ENCODE measurements at regions of chr22 and their contacts with region 1.

Region 1: DNA sequence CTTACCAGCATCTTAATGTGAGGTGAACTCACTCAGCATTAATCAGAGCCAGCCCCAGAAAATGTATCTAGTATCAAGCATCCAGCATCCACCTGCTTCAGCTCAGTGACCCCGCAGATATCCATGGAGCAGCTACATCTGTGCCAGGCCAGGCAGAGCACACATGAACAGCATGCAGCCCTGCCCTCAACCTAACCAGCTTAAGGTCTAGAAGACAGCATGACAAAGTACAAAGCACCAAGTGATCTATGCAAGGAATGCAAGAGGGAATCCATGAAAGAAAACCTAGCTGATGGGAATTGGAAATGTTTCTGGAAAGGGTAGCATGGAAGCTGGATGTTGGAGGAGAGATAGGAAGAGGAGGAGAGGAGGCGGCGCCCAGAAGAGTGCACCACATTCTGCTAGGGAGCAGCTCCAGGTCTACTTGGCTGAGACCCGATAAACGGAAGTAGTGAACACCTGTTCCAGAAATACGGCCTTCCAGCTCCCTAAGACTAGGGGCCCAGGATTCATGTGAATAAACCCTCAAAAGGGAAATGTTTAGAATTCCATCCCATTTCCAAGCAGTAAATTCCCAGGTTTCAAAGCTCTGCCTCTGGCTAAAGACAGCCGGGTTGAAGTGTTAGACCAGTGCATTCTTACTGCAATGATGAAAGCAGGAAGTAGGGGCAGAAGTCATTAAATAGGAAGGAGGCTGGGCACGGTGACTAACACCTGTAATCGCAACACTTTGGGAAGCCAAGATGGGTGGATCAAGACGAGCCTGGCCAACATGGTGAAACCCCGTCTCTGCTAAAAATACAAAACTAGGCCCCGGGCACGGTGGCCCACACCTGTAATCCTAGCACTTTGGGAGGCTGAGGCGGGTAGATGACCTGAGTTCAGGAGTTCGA is 23.5 kb upstream of the L3MBTL2 start:
- DNase-seq: peak; percentile 87
- H3K4me3 ChIP-seq: no peak overlapping the region
- H3K27ac ChIP-seq: peak overlapping the region; percentile 83
- H3K4me1 ChIP-seq: peaks cover 40% of the 10 kb centered on the region
- H3K27me3 ChIP-seq: no peaks in the 10 kb centered on the region
- CTCF ChIP-seq: no peak
- POLR2A ChIP-seq: peak; percentile 22

Region 2: GRCh38 chr22:40826984-40827741 is 354.4 kb before region 1 on chr22:
- CTCF ChIA-PET with region 1: no interaction called
- POLR2A ChIA-PET with region 1: no interaction called
- dilution Hi-C with region 1: no loop called
- intact Hi-C with region 1: no loop called
- DNase-seq: no peak
- H3K4me3 ChIP-seq: no peak overlapping the region
- H3K27ac ChIP-seq: no peak overlapping the region
- H3K4me1 ChIP-seq: no peaks in the 10 kb centered on the region
- H3K27me3 ChIP-seq: no peaks in the 10 kb centered on the region
- CTCF ChIP-seq: no peak
- POLR2A ChIP-seq: no peak

Region 3: DNA sequence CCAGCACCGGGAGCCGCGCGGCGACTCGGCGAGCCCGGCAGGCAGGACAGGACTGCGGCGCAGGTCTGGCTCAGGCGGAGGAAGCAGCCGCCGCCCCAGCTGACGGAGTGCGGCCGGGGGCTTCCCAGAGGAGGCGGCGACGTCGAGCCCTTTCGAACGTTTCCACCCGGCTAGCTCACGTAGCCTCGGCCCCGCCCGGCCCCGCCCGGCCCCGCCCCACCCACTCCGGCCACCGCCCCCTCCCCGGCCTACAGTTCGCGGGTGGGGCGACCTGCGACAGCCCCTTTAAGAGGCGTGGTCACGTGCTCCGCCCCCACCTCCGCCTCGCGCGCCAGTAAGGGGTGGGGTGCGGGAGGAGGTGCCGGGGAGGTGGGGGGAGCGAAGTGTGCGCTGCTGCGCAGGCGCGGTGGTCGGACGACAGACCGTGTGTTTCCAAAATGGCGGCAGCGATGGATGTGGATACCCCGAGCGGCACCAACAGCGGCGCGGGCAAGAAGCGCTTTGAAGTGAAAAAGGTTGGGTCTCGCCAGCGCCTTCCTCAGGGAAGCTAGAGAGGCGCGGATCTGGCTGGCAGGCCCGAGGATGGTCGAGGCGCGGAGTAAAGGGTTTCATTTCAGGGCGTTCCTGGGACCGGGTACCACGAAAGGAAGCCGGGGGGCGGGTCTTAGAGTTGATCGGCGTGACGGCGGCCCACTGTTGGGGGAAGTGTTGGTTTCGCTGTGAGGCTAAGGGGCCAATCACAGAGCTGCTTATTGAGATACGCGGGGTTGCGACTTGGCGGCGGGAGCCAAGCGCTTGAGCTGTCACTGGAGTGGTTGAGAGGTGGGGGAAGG is 230.4 kb before region 1 on chr22 and contains the start of gene RBX1:
- CTCF ChIA-PET with region 1: interaction called, 3 read pairs
- POLR2A ChIA-PET with region 1: no interaction called
- dilution Hi-C with region 1: no loop called
- intact Hi-C with region 1: loop called (anchors 5 kb)
- DNase-seq: peak; percentile 97
- H3K4me3 ChIP-seq: peak within 1 kb of the TSS; percentile 84 to 100 (median 100)
- H3K27ac ChIP-seq: peak within 1 kb of the TSS; percentile 98
- H3K4me1 ChIP-seq: peaks cover 19% of the 10 kb centered on the region
- H3K27me3 ChIP-seq: no peaks in the 10 kb centered on the region
- CTCF ChIP-seq: no peak
- POLR2A ChIP-seq: peak; percentile 93
- total RNA-seq, gene RBX1: 74.7 and 77.7 TPM in 2 replicates

Region 4: GRCh38 chr22:41197038-41197972 is 15.7 kb after region 1 on chr22:
- CTCF ChIA-PET with region 1: interaction called, 3 read pairs
- POLR2A ChIA-PET with region 1: interaction called, 4 read pairs
- dilution Hi-C with region 1: no loop called
- intact Hi-C with region 1: loop called (anchors 1 kb)
- DNase-seq: peak; percentile 75
- H3K4me3 ChIP-seq: peak overlapping the region; percentile 22 to 65 (median 31)
- H3K27ac ChIP-seq: no peak overlapping the region
- H3K4me1 ChIP-seq: peaks cover 5% of the 10 kb centered on the region
- H3K27me3 ChIP-seq: no peaks in the 10 kb centered on the region
- CTCF ChIP-seq: peak in 1 of 2 donors; percentile 10
- POLR2A ChIP-seq: no peak

Region 5: DNA sequence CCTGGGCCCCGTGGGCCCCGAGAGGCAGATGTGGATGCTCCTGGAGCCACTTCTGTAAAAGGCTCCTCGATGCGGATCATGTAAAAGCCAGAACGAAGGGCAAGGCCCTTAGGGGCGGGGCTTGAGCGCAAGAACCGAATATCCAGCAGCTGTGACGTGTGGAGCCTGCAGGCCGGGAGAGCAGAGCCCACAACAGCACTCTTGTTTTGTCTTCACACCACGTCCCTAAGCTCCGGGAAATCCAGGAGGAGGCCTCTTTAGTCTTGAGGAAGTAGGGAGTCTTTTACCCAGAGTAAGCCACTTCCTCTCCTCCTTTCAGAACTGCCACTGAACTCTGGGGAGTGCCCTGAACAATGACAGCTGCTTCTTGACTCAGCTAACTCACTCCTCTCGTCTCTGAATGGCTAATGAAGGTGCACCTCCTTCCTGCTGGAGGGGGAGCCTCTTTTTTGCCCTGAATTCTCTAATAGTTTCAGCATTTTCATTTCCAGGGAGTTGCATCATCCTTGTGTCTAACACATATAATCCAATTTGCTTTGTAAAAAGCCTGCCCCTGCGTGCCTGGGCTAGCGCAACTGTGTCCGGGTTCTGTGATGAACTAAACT is 36.1 kb after region 1 on chr22:
- CTCF ChIA-PET with region 1: no interaction called
- POLR2A ChIA-PET with region 1: no interaction called
- dilution Hi-C with region 1: no loop called
- intact Hi-C with region 1: loop called (anchors 1 kb)
- DNase-seq: peak; percentile 72
- H3K4me3 ChIP-seq: no peak overlapping the region
- H3K27ac ChIP-seq: peak overlapping the region; percentile 29
- H3K4me1 ChIP-seq: peaks cover 12% of the 10 kb centered on the region
- H3K27me3 ChIP-seq: no peaks in the 10 kb centered on the region
- CTCF ChIP-seq: no peak
- POLR2A ChIP-seq: no peak

Region 6: DNA sequence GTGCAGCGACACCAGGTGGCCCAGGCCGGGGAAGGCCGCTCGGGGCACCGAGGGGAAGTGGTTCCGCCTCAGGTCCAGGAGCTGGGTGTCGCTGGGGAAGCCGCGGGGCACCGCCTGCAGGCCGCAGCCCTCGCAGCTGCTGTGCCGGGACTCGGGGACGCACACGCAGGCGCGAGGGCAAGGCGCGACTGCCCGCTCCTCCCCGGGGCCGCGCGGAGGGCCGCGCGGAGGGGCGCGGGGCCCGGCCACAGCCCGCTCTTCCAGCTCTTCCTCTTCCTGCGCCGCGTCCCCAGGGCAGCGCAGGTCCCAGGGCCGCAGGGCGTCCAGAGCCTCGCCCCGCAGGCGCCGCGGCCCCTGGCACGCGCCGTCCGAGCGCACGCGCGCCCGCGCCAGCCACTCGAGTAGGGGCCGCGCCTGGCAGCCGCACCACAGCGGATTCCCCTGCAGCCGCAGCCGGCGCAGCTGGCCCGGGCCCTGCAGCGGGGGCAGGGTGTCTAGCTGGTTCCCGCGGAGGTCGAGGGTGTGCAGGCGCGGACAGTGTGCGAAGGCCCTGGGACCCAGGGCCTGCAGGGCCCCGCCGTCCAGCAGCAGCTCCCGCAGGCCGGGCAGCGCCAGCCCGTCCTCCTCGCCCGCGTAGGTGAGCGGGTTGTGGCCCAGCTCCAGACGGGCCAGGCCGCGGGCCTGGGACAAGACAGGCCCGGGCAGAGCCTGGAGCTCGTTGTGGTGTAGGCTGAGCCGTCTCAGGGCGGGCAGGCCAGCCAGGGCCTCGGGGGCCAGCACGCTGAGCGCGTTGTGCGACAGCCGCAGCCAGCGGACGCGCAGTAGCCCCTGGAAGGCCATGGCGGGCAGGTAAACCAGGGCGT is 56.3 kb after region 1 on chr22:
- CTCF ChIA-PET with region 1: interaction called, 13 read pairs
- POLR2A ChIA-PET with region 1: no interaction called
- dilution Hi-C with region 1: no loop called
- intact Hi-C with region 1: loop called (anchors 2 kb)
- DNase-seq: peak; percentile 31
- H3K4me3 ChIP-seq: peak overlapping the region in 1 of 3 experiments; percentile 5
- H3K27ac ChIP-seq: no peak overlapping the region
- H3K4me1 ChIP-seq: peaks cover 6% of the 10 kb centered on the region
- H3K27me3 ChIP-seq: no peaks in the 10 kb centered on the region
- CTCF ChIP-seq: peak; percentile 28 to 58
- POLR2A ChIP-seq: peak; percentile 56

Region 7: GRCh38 chr22:41285820-41286638 is 104.4 kb after region 1 on chr22 and contains the start of gene RANGAP1:
- CTCF ChIA-PET with region 1: no interaction called
- POLR2A ChIA-PET with region 1: no interaction called
- dilution Hi-C with region 1: no loop called
- intact Hi-C with region 1: loop called (anchors 5 kb)
- DNase-seq: peak; percentile 99
- H3K4me3 ChIP-seq: peak within 1 kb of the TSS; percentile 51 to 88 (median 55)
- H3K27ac ChIP-seq: peak within 1 kb of the TSS; percentile 71
- H3K4me1 ChIP-seq: peaks cover 57% of the 10 kb centered on the region
- H3K27me3 ChIP-seq: no peaks in the 10 kb centered on the region
- CTCF ChIP-seq: peak in 1 of 2 donors; percentile 28
- POLR2A ChIP-seq: peak; percentile 72
- total RNA-seq, gene RANGAP1: 154 and 169 TPM in 2 replicates

Region 8: DNA sequence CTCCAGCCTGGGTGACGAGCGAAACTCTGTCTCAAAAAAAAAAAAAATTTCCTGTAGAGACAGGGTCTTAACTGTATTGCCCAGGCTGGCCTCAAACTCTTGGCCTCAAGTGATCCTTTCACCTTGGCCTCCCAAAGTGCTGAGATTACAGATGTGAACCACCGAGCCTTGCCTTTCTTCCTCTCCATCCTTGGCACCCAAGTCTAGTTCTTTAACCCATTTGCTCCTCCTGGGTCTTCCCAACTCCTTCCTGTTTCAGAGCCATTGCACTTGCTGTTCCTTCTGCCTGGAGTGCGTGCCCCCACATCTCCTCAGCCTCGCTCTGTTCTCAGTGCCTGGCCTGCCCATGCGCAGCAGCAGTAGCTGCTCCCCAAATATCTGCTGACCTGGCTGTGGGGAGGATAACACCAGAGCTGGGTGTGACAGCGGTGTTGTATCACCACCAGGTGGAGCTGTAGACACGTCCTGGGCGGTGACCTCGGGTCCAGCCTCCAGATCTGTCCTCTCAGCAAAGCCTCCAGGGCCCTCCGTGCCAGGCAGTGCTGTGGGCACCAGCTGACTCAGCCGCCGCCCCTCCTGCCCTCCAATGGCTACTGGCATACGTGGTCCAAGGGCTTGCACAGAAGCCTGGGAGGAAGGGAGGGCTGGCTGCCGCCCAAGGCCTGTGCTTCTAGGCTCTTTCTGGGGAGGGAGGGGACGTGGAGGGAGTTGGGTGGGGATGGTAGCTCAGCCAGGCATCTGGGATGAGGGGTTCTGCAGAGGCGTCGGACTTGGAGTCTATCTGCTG is 222.1 kb after region 1 on chr22:
- CTCF ChIA-PET with region 1: no interaction called
- POLR2A ChIA-PET with region 1: no interaction called
- dilution Hi-C with region 1: no loop called
- intact Hi-C with region 1: no loop called
- DNase-seq: peak; percentile 80
- H3K4me3 ChIP-seq: no peak overlapping the region
- H3K27ac ChIP-seq: no peak overlapping the region
- H3K4me1 ChIP-seq: no peaks in the 10 kb centered on the region
- H3K27me3 ChIP-seq: no peaks in the 10 kb centered on the region
- CTCF ChIP-seq: peak; percentile 94 to 97
- POLR2A ChIP-seq: no peak

Region 9: DNA sequence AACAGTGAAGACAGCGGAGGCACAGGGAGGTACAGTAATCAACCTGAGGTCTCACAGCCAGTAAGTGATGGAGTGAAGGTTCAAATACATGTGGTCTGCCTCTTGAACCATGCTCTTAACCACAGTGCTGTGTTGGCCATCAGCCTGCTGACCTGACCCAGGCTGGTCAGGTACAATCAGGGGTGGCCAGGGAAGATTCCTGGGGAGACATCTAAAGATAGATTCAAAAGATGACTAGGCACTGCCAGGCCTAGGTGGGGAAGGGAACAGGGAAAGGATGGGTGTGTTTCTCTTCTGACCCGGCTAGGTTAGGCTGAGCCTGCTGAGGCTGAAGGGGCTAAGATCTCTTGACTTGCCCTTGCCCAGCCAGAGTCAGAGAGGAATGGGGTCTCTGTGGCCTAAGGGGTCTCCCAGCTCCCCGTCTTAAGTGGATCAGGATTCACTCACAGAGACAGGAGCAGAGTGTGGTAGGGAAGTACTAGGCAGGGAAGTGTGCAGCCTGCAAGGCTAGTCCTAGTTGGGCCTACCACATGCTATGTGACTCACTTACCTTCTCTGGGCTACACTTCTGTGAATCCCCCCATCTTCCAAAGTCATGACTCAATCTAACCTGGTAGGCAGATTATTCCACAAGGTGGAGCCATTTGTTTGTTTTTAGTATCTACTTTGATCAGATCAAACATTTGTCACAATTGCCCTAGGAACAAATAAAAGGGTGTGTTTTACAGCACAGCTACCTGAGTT is 640.9 kb after region 1 on chr22:
- CTCF ChIA-PET with region 1: no interaction called
- POLR2A ChIA-PET with region 1: no interaction called
- dilution Hi-C with region 1: no loop called
- intact Hi-C with region 1: no loop called
- DNase-seq: peak; percentile 65
- H3K4me3 ChIP-seq: no peak overlapping the region
- H3K27ac ChIP-seq: no peak overlapping the region
- H3K4me1 ChIP-seq: peaks cover 3% of the 10 kb centered on the region
- H3K27me3 ChIP-seq: no peaks in the 10 kb centered on the region
- CTCF ChIP-seq: peak; percentile 17 to 29
- POLR2A ChIP-seq: no peak

Measured in endothelial cell of umbilical vein (primary cell).